PC-9 (cell line): ENCODE measurements at regions of chr11 and their contacts with region 1.

Region 1: DNA sequence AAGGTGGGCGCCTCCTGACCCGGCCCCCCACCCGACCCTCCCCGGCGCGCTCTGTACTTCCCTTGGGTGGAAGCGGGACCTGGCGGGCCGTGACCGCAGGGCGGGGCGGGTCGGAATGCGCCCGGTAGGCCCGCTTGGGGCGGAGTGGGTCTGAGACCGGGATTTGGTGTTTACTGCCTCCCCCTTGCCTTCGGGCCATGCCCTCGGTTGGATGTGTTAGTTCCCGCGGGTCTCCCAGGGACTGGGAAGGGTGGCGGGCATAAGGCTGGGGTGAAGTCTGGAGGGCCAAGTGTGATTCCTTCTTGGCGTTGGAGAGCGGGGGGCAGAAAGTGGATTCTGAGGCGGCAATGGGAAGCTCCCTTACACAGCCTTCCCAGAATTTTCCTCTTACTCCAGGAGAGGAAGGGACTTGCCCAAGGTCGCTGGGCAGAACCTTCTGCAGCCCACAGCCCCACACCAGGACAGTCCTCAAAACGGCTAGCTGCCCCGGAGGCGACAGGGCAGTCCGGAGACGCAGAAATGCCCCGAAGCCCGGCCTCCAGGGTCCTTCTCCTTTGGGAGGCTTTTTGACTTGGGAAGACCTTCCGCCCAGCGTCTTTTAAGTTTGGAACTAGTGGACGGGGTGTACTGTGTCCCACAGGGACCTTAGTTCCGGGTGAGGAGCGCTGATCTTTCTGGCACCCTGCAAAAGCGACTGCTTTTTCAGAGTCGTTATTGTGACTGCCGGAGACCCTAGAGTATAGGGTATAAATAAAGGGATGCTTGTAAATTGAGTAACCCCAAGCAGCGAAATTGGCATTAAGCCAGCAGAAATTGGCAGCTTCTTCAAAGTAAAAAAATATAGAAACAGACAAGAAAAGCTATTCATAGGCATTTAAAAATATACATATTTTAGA is 647 bp downstream of the SWAP70 start:
- DNase-seq: peak in 1 of 2 experiments; percentile 38
- H3K4me3 ChIP-seq: peak overlapping the region; percentile 66
- H3K27ac ChIP-seq: no peak overlapping the region
- H3K4me1 ChIP-seq: no peaks in the 10 kb centered on the region
- H3K27me3 ChIP-seq: no peaks in the 10 kb centered on the region
- CTCF ChIP-seq: no peak

Region 2: DNA sequence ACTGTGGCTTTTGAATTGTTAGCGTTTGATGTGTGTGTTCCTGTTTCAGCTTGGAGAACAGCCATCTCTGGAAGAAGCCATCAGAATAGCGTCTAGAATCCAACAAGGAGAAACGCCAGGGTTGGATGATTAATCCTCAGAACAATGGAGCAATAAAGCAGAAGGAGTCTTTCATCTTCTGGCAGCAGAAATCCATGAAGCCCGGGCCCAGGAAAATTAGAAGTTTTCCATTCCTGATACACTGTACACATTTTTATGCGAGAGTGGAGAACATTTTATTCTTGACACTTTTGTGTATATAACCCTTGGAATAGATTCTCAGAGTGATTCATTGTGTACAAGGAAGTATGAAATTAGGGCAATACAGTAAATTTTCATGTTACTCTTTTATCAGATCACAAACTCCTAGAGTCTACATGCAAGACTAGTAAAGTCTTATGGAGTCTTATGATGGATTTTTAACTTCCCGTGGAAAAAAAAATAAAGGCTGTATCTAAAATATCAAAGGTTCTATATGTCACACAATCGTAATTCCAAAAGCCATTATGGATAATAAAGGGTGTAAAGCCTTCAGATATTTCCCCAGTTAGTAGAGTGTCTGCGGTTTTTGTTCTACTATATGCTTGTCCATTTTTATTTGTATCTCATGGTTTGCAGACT is 136.9 kb before region 1 on chr11:
- CTCF ChIA-PET with region 1: interaction called, 15 read pairs
- POLR2A ChIA-PET with region 1: no interaction called
- intact Hi-C with region 1: no loop called
- DNase-seq: peak in 1 of 2 experiments; percentile 67
- H3K4me3 ChIP-seq: no peak overlapping the region
- H3K27ac ChIP-seq: peak overlapping the region; percentile 85
- H3K4me1 ChIP-seq: peaks cover 53% of the 10 kb centered on the region
- H3K27me3 ChIP-seq: no peaks in the 10 kb centered on the region
- CTCF ChIP-seq: no peak